ENCODE measurements at regions of chr16 and their contacts with region 1.

Region 1: DNA sequence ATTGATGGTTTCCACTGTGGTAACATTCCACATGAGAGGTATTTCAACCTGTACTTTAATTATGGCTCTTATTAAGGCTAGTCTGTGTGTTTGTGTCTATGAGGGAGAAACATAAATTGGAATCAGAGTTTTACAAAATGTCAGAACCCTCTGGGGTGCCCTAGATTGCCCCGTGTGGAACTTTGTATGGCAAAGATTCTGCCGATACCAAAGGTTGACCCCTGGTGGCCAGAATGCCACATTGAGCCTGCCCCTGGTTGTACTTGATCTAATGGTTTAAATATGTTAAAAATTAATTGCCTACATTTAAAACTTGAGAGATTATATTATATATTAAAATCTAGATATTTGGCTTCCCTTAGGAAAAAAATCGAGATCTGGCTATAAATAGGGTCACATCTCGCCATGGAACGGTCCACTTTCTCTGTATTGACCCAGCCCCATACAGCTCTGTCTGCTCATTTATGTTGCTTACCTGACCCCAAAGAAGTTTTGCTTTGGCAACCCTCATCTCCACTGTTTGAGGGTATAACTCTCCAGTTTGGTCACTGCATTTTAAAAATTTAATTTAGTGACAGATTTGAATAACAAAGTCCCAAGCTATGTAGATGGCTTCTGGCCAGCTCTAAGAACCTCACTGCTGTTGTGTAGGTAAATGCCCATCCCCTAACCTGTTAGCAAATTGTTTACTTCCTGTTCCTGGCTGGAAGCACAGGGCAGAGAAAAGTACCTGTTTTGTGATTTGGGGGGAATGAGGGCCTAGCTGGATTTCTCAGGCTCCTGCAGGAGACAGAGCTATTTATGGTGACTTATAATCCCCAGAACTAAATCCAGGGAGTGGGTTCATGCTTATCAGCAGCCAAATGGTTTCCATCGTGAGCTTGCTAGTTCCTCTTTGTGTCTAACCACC is 95.0 kb downstream of the PLCG2 start:
- DNase-seq: peak; percentile 74
- H3K4me3 Mint-ChIP-seq: no peak overlapping the region
- H3K27ac Mint-ChIP-seq: no peak overlapping the region
- H3K4me1 Mint-ChIP-seq: peaks cover 10% of the 10 kb centered on the region
- H3K27me3 Mint-ChIP-seq: no peaks in the 10 kb centered on the region

Region 2: GRCh38 chr16:81366316-81366932 is 507.7 kb before region 1 on chr16:
- CTCF ChIA-PET with region 1: interaction called, 5 read pairs
- POLR2A ChIA-PET with region 1: no interaction called
- intact Hi-C with region 1: loop called (anchors 10 kb)
- DNase-seq: no peak
- H3K4me3 Mint-ChIP-seq: no peak overlapping the region
- H3K27ac Mint-ChIP-seq: no peak overlapping the region
- H3K4me1 Mint-ChIP-seq: no peaks in the 10 kb centered on the region
- H3K27me3 Mint-ChIP-seq: no peaks in the 10 kb centered on the region

Region 3: GRCh38 chr16:81755915-81756614 is 118.0 kb before region 1 on chr16:
- CTCF ChIA-PET with region 1: interaction called, 5 read pairs
- POLR2A ChIA-PET with region 1: no interaction called
- intact Hi-C with region 1: loop called (anchors 5 kb)
- DNase-seq: no peak
- H3K4me3 Mint-ChIP-seq: no peak overlapping the region
- H3K27ac Mint-ChIP-seq: no peak overlapping the region
- H3K4me1 Mint-ChIP-seq: peaks cover 4% of the 10 kb centered on the region
- H3K27me3 Mint-ChIP-seq: no peaks in the 10 kb centered on the region

Region 4: GRCh38 chr16:81798311-81799137 is 75.6 kb before region 1 on chr16:
- CTCF ChIA-PET with region 1: interaction called, 4 read pairs
- POLR2A ChIA-PET with region 1: no interaction called
- intact Hi-C with region 1: loop called (anchors 1 kb)
- DNase-seq: peak; percentile 76
- H3K4me3 Mint-ChIP-seq: peak overlapping the region; percentile 35
- H3K27ac Mint-ChIP-seq: peak overlapping the region; percentile 83
- H3K4me1 Mint-ChIP-seq: peaks cover 24% of the 10 kb centered on the region
- H3K27me3 Mint-ChIP-seq: no peaks in the 10 kb centered on the region

Region 5: GRCh38 chr16:81861503-81861902 is 12.6 kb before region 1 on chr16:
- CTCF ChIA-PET with region 1: interaction called, 16 read pairs
- POLR2A ChIA-PET with region 1: interaction called, 3 read pairs
- intact Hi-C with region 1: no loop called
- DNase-seq: no peak
- H3K4me3 Mint-ChIP-seq: no peak overlapping the region
- H3K27ac Mint-ChIP-seq: no peak overlapping the region
- H3K4me1 Mint-ChIP-seq: peaks cover 7% of the 10 kb centered on the region
- H3K27me3 Mint-ChIP-seq: peaks cover 3% of the 10 kb centered on the region

Region 6: DNA sequence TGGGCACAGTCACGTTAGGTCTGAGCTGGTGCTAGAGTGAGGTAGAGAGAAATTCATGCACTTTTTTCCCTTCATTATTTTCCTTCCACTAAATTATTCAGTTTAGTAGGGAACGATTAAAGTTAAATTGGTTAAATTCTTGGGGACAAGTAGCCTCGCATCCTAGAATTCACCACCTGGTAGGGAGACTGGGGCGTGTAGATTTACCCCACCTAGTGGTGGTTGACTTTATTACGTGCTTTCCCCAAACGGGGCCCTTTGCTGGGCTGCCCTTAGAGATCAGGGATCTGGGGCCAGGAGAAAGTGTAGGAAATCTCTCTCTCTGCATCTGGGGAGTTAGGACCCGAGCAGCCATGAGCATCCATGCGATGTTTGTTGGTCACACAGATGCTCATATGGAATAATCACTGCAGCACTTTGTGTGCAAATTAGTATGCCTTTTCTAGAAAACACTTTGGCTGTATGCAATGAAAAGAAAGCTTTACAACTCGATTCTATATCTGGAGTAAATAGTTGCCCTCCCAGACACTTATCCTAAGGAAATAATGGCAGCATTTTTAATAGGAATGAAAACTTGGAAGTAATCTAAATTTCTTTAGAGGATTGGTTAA is 12.0 kb after region 1 on chr16:
- CTCF ChIA-PET with region 1: interaction called, 32 read pairs
- POLR2A ChIA-PET with region 1: no interaction called
- intact Hi-C with region 1: no loop called
- DNase-seq: peak; percentile 35
- H3K4me3 Mint-ChIP-seq: no peak overlapping the region
- H3K27ac Mint-ChIP-seq: no peak overlapping the region
- H3K4me1 Mint-ChIP-seq: no peaks in the 10 kb centered on the region
- H3K27me3 Mint-ChIP-seq: no peaks in the 10 kb centered on the region